ENCODE measurements at regions of chrX and their contacts with region 1.

Region 1: GRCh38 chrX:64867217-64867616 is 109.0 kb downstream of the ZC4H2 start:
- DNase-seq: no peak
- H3K4me3 Mint-ChIP-seq: no peak overlapping the region
- H3K27ac Mint-ChIP-seq: no peak overlapping the region
- H3K4me1 Mint-ChIP-seq: peaks cover 24% of the 10 kb centered on the region
- H3K27me3 Mint-ChIP-seq: no peaks in the 10 kb centered on the region

Region 2: DNA sequence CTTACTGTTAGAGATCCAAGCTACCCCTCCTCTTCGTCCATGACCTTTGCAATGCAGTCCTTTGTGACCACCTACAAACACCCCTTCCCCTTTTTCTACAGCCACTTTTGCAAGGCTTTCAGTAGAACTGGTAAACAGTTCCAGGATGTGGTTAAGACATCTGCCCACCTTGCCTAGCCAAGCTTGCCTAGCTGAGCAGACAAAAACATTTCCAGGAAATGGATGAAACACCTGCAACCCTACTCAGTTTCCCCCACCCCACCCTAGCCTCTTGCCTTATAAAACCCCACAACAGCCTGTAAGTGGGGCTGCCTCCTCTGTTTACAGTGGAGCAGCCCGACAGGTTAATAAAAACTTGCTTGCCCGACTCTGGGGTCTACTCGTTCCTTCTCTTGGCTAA is 24.7 kb before region 1 on chrX:
- intact Hi-C with region 1: loop called (anchors 2 kb)
- DNase-seq: peak; percentile 2
- H3K4me3 Mint-ChIP-seq: peak overlapping the region; percentile 4
- H3K27ac Mint-ChIP-seq: peak overlapping the region; percentile 85
- H3K4me1 Mint-ChIP-seq: peaks cover 22% of the 10 kb centered on the region
- H3K27me3 Mint-ChIP-seq: no peaks in the 10 kb centered on the region

Region 3: GRCh38 chrX:65758505-65758904 is 891.3 kb after region 1 on chrX:
- intact Hi-C with region 1: no loop called
- DNase-seq: no peak
- H3K4me3 Mint-ChIP-seq: no peak overlapping the region
- H3K27ac Mint-ChIP-seq: no peak overlapping the region
- H3K4me1 Mint-ChIP-seq: peaks cover 41% of the 10 kb centered on the region
- H3K27me3 Mint-ChIP-seq: no peaks in the 10 kb centered on the region